HepG2 (cell line): ENCODE measurements at regions of chr6 and their contacts with region 1.

Region 1: GRCh38 chr6:105402939-105403935 is at the start of gene PREP:
- DNase-seq: peak; percentile 67
- ATAC-seq: peak; percentile 93
- H3K4me3 ChIP-seq: peak within 1 kb of the TSS; percentile 95 to 97 (median 96)
- H3K27ac ChIP-seq: peak within 1 kb of the TSS; percentile 80
- H3K4me1 ChIP-seq: peaks cover 58% of the 10 kb centered on the region
- H3K27me3 ChIP-seq: no peaks in the 10 kb centered on the region; a peak in 1 of 5 replicates
- CTCF ChIP-seq: peak; percentile 78
- EP300 ChIP-seq: no peak
- POLR2A ChIP-seq: peak; percentile 46 to 74; a peak in 1 of 4 replicates
- RAD21 ChIP-seq: peak; percentile 88
- total RNA-seq, gene PREP: 15.9 and 32.2 TPM in 2 replicates

Region 2: DNA sequence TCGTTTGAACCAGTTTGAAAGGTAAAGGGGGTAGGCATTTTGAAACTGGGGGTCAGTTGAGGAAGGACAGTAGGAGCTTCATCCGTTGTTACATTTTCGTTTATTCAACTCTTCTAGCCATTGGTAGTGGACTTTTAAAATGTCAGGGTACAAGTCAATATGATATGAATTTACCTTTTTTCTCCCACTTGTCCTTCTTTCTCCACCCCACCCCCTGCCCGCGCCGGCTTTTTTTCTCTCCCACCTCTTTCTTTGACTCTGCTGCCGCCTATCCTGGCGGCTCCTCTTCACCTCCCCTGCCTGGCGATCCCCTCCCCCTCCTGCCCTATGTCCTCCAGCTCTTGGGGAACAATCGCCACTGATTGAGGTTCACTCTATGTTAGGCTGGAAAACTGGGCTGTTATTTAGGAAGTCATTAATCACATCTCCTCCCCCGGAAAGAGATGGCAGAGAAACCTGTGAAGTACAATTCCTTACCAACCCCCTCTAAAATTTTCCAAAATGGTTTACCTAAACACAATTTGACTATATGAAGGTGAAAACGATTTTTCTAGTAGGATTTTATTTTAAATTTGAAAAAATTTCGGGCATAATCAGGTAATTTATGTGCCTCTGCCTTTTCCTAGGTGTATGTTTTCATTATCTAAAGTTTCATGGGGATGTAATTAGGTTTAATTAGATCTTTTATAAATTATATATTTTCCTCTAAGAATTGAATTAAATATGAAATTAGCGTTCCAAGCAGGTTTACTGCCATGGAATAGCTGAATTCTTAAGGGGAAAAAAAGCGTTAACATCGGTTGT is 447.1 kb before region 1 on chr6:
- CTCF ChIA-PET with region 1: no interaction called
- POLR2A ChIA-PET with region 1: no interaction called
- in situ Hi-C with region 1: no loop called
- intact Hi-C with region 1: loop called (anchors 10 kb)
- DNase-seq: peak; percentile 78
- ATAC-seq: peak; percentile 70
- H3K4me3 ChIP-seq: peak overlapping the region; percentile 70 to 89 (median 72)
- H3K27ac ChIP-seq: peak overlapping the region; percentile 90
- H3K4me1 ChIP-seq: peaks cover 29% of the 10 kb centered on the region
- H3K27me3 ChIP-seq: no peaks in the 10 kb centered on the region; a peak in 2 of 5 replicates
- CTCF ChIP-seq: peak; percentile 51
- EP300 ChIP-seq: peak in 1 of 2 experiments; percentile 51; a peak in 1 of 4 replicates
- POLR2A ChIP-seq: peak in 1 of 2 experiments; percentile 29; a peak in 1 of 4 replicates
- RAD21 ChIP-seq: no peak

Region 3: GRCh38 chr6:105087571-105088211 is 315.5 kb before region 1 on chr6:
- CTCF ChIA-PET with region 1: interaction called, 9 read pairs
- POLR2A ChIA-PET with region 1: no interaction called
- in situ Hi-C with region 1: loop called (anchors 10 kb)
- intact Hi-C with region 1: loop called (anchors 1 kb)
- DNase-seq: peak; percentile 46
- ATAC-seq: peak; percentile 48
- H3K4me3 ChIP-seq: no peak overlapping the region
- H3K27ac ChIP-seq: no peak overlapping the region
- H3K4me1 ChIP-seq: peaks cover 6% of the 10 kb centered on the region; the same call in 1 of the 2 replicates
- H3K27me3 ChIP-seq: no peaks in the 10 kb centered on the region
- CTCF ChIP-seq: peak; percentile 79
- EP300 ChIP-seq: no peak
- POLR2A ChIP-seq: no peak
- RAD21 ChIP-seq: peak; percentile 51

Region 4: GRCh38 chr6:105097288-105097687 is 305.9 kb before region 1 on chr6:
- CTCF ChIA-PET with region 1: no interaction called
- POLR2A ChIA-PET with region 1: no interaction called
- in situ Hi-C with region 1: loop called (anchors 10 kb)
- intact Hi-C with region 1: no loop called
- DNase-seq: no peak
- ATAC-seq: no peak
- H3K4me3 ChIP-seq: no peak overlapping the region
- H3K27ac ChIP-seq: no peak overlapping the region
- H3K4me1 ChIP-seq: no peaks in the 10 kb centered on the region
- H3K27me3 ChIP-seq: no peaks in the 10 kb centered on the region
- CTCF ChIP-seq: no peak
- EP300 ChIP-seq: no peak
- POLR2A ChIP-seq: no peak
- RAD21 ChIP-seq: no peak

Region 5: DNA sequence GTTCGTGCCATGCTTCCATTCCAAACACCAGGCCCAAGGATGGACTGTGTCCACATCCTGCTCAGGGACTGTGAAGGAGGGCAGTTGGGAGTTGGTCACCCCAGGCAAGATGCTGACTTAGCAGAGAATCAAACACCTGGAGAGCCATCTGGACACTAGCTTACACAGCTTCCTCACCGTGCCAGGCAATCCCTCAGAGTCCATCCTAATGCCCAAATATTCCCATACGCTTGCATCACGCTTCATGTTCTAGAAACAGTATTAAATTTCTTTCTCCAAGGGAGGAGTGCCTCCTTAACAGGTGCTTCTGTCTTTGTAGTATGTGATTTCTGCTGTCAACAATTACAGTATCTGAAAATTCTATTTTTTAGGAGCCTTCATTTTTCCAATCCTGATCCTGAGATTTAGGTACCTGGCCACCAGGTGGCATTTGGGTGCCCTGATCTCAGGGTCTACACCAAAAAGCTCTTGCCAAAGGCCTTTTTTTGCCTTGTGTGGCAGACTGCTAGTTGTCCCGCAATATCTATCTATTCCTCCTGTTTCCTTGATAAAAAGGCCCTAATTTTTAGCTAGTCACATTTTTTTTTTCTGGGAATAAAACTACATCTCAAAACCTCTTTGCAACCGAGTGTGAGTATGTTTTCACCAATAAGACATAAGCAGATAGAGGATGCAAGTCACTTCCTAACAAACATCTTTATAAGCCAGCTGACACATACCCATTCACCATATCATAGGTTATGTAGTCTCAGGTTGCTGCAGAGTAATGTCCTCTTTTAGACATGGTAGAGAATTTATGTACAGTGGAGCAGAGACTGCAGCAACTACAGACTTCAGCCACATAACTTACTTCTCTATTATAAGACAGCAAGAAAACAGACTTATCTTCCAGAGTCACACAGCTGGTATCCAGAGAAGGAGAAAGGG is 85.4 kb before region 1 on chr6:
- CTCF ChIA-PET with region 1: interaction called, 8 read pairs
- POLR2A ChIA-PET with region 1: no interaction called
- in situ Hi-C with region 1: loop called (anchors 10 kb)
- intact Hi-C with region 1: loop called (anchors 1 kb)
- DNase-seq: peak; percentile 8
- ATAC-seq: peak; percentile 71
- H3K4me3 ChIP-seq: no peak overlapping the region
- H3K27ac ChIP-seq: no peak overlapping the region
- H3K4me1 ChIP-seq: no peaks in the 10 kb centered on the region; the same call in 1 of the 2 replicates
- H3K27me3 ChIP-seq: no peaks in the 10 kb centered on the region
- CTCF ChIP-seq: peak; percentile 32; the same call in 1 of the 2 replicates
- EP300 ChIP-seq: no peak
- POLR2A ChIP-seq: no peak
- RAD21 ChIP-seq: no peak

Region 6: GRCh38 chr6:105326833-105327770 is 76.1 kb before region 1 on chr6:
- CTCF ChIA-PET with region 1: no interaction called
- POLR2A ChIA-PET with region 1: no interaction called
- in situ Hi-C with region 1: loop called (anchors 10 kb)
- intact Hi-C with region 1: no loop called
- DNase-seq: no peak
- ATAC-seq: no peak
- H3K4me3 ChIP-seq: no peak overlapping the region
- H3K27ac ChIP-seq: no peak overlapping the region
- H3K4me1 ChIP-seq: peaks cover 14% of the 10 kb centered on the region
- H3K27me3 ChIP-seq: no peaks in the 10 kb centered on the region
- CTCF ChIP-seq: no peak
- EP300 ChIP-seq: no peak
- POLR2A ChIP-seq: no peak
- RAD21 ChIP-seq: no peak

Region 7: DNA sequence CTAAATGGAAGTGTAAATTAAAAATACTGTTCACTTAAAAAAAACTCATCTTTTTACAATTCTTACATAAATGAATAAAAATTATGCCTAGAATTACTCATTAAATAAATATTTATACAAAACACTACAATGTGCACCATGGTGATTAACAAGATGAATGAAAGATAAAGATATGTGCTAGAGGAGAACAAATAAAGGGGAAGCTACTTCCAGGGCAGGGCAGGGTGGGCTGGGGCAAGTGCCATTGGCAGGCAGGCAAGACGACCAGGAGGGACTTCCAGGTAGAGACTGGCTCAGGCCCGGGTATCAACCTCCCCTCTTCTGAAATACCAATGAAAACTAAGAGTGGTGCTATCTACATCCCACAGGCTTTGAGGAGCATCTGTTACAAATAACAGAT is 20.7 kb before region 1 on chr6:
- CTCF ChIA-PET with region 1: no interaction called
- POLR2A ChIA-PET with region 1: no interaction called
- in situ Hi-C with region 1: no loop called
- intact Hi-C with region 1: loop called (anchors 2 kb)
- DNase-seq: no peak
- ATAC-seq: no peak
- H3K4me3 ChIP-seq: no peak overlapping the region
- H3K27ac ChIP-seq: no peak overlapping the region
- H3K4me1 ChIP-seq: peaks cover 51% of the 10 kb centered on the region
- H3K27me3 ChIP-seq: no peaks in the 10 kb centered on the region
- CTCF ChIP-seq: no peak
- EP300 ChIP-seq: no peak
- POLR2A ChIP-seq: no peak
- RAD21 ChIP-seq: no peak